ENCODE measurements at regions of chr12 and their contacts with region 1.

Region 1: DNA sequence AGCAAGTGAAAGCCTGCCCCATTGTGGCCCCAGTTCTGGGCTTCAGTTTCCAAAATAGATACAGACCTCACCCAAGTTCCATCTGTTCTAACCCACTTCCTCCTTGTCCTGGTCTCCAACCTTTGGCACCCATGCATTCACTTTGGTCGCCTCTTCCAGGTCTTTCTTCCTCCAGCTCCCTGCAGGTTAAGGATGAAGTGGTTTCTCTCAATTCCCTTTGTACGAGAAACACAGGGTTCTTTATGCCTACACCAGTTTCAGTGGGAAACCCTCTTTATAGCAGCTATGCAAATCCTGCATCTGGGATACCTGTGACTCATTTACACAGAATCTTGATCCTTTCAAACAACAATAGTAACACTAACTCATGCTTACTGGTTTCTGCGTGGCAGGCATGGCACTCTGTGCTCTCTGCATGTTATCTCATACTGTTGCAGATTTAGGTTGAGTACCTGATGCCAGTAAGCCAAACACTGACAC is 110.6 kb upstream of the AMIGO2 start:
- DNase-seq: no peak
- ATAC-seq: no peak
- H3K4me3 ChIP-seq: no peak overlapping the region
- H3K4me3 Mint-ChIP-seq: peak overlapping the region; percentile 30
- H3K27ac ChIP-seq: no peak overlapping the region
- H3K27ac Mint-ChIP-seq: peak overlapping the region; percentile 23
- H3K4me1 ChIP-seq: peaks cover 62 to 67% of the 10 kb centered on the region in 2 donors
- H3K4me1 Mint-ChIP-seq: peaks cover 64% of the 10 kb centered on the region
- H3K27me3 ChIP-seq: no peaks in the 10 kb centered on the region
- H3K27me3 Mint-ChIP-seq: no peaks in the 10 kb centered on the region
- CTCF ChIP-seq: no peak

Region 2: GRCh38 chr12:47124451-47124850 is 65.9 kb before region 1 on chr12:
- CTCF ChIA-PET with region 1: no interaction called
- POLR2A ChIA-PET with region 1: no interaction called
- intact Hi-C with region 1: no loop called
- DNase-seq: no peak
- ATAC-seq: no peak
- H3K4me3 ChIP-seq: no peak overlapping the region
- H3K4me3 Mint-ChIP-seq: no peak overlapping the region
- H3K27ac ChIP-seq: no peak overlapping the region
- H3K27ac Mint-ChIP-seq: no peak overlapping the region
- H3K4me1 ChIP-seq: no peaks in the 10 kb centered on the region
- H3K4me1 Mint-ChIP-seq: peaks cover 9% of the 10 kb centered on the region
- H3K27me3 ChIP-seq: no peaks in the 10 kb centered on the region
- H3K27me3 Mint-ChIP-seq: no peaks in the 10 kb centered on the region
- CTCF ChIP-seq: no peak

Region 3: GRCh38 chr12:47207340-47207717 is 17.0 kb after region 1 on chr12:
- CTCF ChIA-PET with region 1: interaction called, 19 read pairs
- POLR2A ChIA-PET with region 1: interaction called, 4 read pairs
- intact Hi-C with region 1: loop called (anchors 1 kb)
- DNase-seq: peak; percentile 87
- ATAC-seq: peak; percentile 85
- H3K4me3 ChIP-seq: peak overlapping the region in 2 of 5 experiments; percentile 7 to 31
- H3K4me3 Mint-ChIP-seq: peak overlapping the region; percentile 75
- H3K27ac ChIP-seq: peak overlapping the region; percentile 78 to 84
- H3K27ac Mint-ChIP-seq: peak overlapping the region; percentile 94
- H3K4me1 ChIP-seq: peaks cover 71 to 80% of the 10 kb centered on the region in 2 donors
- H3K4me1 Mint-ChIP-seq: peaks cover 77% of the 10 kb centered on the region
- H3K27me3 ChIP-seq: no peaks in the 10 kb centered on the region
- H3K27me3 Mint-ChIP-seq: no peaks in the 10 kb centered on the region
- CTCF ChIP-seq: no peak